ENCODE measurements at regions of chr20 and their contacts with region 1.

Region 1: GRCh38 chr20:32031007-32031958 is 20.8 kb upstream of the HCK start:
- DNase-seq: peak; percentile 71
- ATAC-seq: peak; percentile 97
- H3K4me3 ChIP-seq: peak overlapping the region; percentile 20 to 38
- H3K27ac ChIP-seq: peak overlapping the region; percentile 29; the same call in 1 of the 2 replicates
- H3K4me1 ChIP-seq: peaks cover 15% of the 10 kb centered on the region
- H3K27me3 ChIP-seq: no peaks in the 10 kb centered on the region; the same call in 1 of the 2 replicates
- CTCF ChIP-seq: peak; percentile 100

Region 2: DNA sequence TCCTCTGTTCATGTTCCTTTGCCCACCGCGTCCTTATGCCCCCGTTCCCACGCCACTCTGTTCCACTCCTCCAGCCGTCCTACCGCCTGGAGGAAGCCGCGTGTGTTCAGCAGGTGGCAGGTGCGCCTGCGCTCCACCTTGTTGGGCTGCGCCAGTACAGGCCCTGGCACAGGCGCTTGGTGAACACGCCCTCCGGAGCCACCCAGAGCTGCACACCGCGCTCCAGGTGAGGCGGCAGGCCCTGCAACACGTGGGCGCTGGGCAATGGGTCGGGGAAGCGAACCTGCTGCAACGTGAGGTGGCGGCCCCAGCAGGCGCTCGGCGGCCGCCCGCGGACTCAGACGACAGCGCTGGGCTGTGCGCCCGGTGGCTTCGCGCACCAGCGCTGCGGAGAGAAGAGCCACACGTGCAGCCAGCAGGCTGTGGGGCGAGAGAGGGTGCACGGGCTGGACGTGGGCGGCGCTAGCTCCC is 181.8 kb before region 1 on chr20:
- CTCF ChIA-PET with region 1: interaction called, 28 read pairs
- POLR2A ChIA-PET with region 1: interaction called, 3 read pairs
- in situ Hi-C with region 1: no loop called
- intact Hi-C with region 1: loop called (anchors 1 kb)
- DNase-seq: no peak
- ATAC-seq: no peak
- H3K4me3 ChIP-seq: no peak overlapping the region
- H3K27ac ChIP-seq: no peak overlapping the region
- H3K4me1 ChIP-seq: peaks cover 16% of the 10 kb centered on the region
- H3K27me3 ChIP-seq: no peaks in the 10 kb centered on the region
- CTCF ChIP-seq: no peak

Region 3: DNA sequence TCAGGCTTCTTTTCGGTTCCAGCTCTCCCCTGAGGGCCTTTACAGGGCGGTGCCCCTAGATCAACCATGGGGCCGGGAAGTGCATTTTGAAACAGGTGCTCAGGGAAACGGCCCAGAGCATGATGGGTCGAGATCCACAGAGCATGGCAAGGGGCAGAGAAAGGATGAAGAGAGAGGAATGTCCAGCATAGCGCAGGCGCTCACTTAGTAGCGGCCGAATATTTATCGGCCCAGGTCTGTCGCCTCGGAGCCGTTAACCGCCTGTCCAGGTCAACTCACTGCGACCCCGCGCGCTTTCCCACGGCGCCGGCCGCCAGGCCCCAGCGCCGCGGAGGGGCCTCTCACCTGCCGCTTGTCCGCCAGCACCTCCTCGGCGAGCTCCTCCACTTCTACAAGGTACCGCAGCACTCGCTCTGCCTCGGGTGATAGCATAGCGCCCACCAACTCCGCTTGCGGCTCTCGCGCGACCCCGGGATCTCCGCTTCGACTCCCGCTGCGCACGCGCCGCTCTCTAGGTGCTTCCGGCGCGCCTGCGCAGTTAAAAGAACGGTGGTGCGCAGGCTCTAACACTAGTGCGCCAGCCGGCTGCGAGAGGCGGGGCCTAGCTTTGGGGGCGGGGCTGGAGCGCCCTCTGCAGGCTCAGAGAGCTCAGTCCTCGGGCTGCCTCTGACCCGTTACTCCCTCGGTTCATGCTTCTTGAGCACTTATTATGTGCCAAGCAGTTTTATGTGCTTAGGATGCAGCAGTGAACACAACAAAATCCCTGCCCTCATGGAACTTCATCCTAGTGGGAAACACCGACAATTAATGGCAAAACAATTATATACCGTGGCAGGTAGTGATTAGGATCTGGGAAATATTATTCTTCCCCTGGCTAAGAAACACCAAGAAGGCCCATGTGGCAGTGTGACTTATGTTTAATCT is 79.5 kb before region 1 on chr20 and contains the start of gene PDRG1:
- CTCF ChIA-PET with region 1: interaction called, 11 read pairs
- POLR2A ChIA-PET with region 1: no interaction called
- in situ Hi-C with region 1: no loop called
- intact Hi-C with region 1: loop called (anchors 5 kb)
- DNase-seq: peak; percentile 93
- ATAC-seq: peak; percentile 99
- H3K4me3 ChIP-seq: peak within 1 kb of the TSS; percentile 79 to 97
- H3K27ac ChIP-seq: peak within 1 kb of the TSS; percentile 96
- H3K4me1 ChIP-seq: peaks cover 16% of the 10 kb centered on the region
- H3K27me3 ChIP-seq: no peaks in the 10 kb centered on the region
- CTCF ChIP-seq: peak; percentile 100
- total RNA-seq, gene PDRG1: 48.2 TPM

Region 4: GRCh38 chr20:32006841-32007786 is 24.2 kb before region 1 on chr20:
- CTCF ChIA-PET with region 1: no interaction called
- POLR2A ChIA-PET with region 1: no interaction called
- in situ Hi-C with region 1: no loop called
- intact Hi-C with region 1: no loop called
- DNase-seq: no peak
- ATAC-seq: no peak
- H3K4me3 ChIP-seq: no peak overlapping the region
- H3K27ac ChIP-seq: peak overlapping the region; percentile 37; the same call in 1 of the 2 replicates
- H3K4me1 ChIP-seq: peaks cover 25% of the 10 kb centered on the region
- H3K27me3 ChIP-seq: no peaks in the 10 kb centered on the region
- CTCF ChIP-seq: no peak

Region 5: GRCh38 chr20:32052090-32052777 is 21.0 kb after region 1 on chr20 and contains the start of gene HCK:
- CTCF ChIA-PET with region 1: no interaction called
- POLR2A ChIA-PET with region 1: no interaction called
- in situ Hi-C with region 1: no loop called
- intact Hi-C with region 1: no loop called
- DNase-seq: no peak
- ATAC-seq: peak; percentile 81
- H3K4me3 ChIP-seq: peak within 1 kb of the TSS; percentile 38 to 39
- H3K27ac ChIP-seq: no peak within 1 kb of the TSS
- H3K4me1 ChIP-seq: no peaks in the 10 kb centered on the region
- H3K27me3 ChIP-seq: peaks cover 17% of the 10 kb centered on the region
- CTCF ChIP-seq: no peak
- total RNA-seq, gene HCK: 0.98 TPM

Region 6: GRCh38 chr20:32077190-32077589 is 45.9 kb after region 1 on chr20:
- CTCF ChIA-PET with region 1: interaction called, 5 read pairs
- POLR2A ChIA-PET with region 1: interaction called, 12 read pairs
- in situ Hi-C with region 1: no loop called
- intact Hi-C with region 1: loop called (anchors 5 kb)
- DNase-seq: no peak
- ATAC-seq: no peak
- H3K4me3 ChIP-seq: no peak overlapping the region
- H3K27ac ChIP-seq: no peak overlapping the region
- H3K4me1 ChIP-seq: no peaks in the 10 kb centered on the region
- H3K27me3 ChIP-seq: peaks cover 3% of the 10 kb centered on the region; the same call in 1 of the 2 replicates
- CTCF ChIP-seq: no peak

Measured in Panc1 (cell line).